HCT116 (cell line): ENCODE measurements at regions of chr2 and their contacts with region 1.

Region 1: GRCh38 chr2:203909261-203909967 is 27.1 kb upstream of the ICOS start:
- DNase-seq: peak; percentile 13
- ATAC-seq: peak; percentile 84
- H3K4me3 ChIP-seq: no peak overlapping the region
- H3K27ac ChIP-seq: no peak overlapping the region
- H3K4me1 ChIP-seq: no peaks in the 10 kb centered on the region
- H3K27me3 ChIP-seq: no peaks in the 10 kb centered on the region
- CTCF ChIP-seq: peak; percentile 46 to 74 (median 65); a peak in 5 of 6 replicates
- POLR2A ChIP-seq: no peak
- RAD21 ChIP-seq: peak; percentile 73

Region 2: GRCh38 chr2:202577250-202578183 is 1331.9 kb before region 1 on chr2:
- CTCF ChIA-PET with region 1: no interaction called
- POLR2A ChIA-PET with region 1: no interaction called
- RAD21 ChIA-PET with region 1: no interaction called
- intact Hi-C with region 1: loop called (anchors 2 kb)
- DNase-seq: no peak
- ATAC-seq: no peak
- H3K4me3 ChIP-seq: no peak overlapping the region
- H3K27ac ChIP-seq: no peak overlapping the region
- H3K4me1 ChIP-seq: no peaks in the 10 kb centered on the region
- H3K27me3 ChIP-seq: no peaks in the 10 kb centered on the region
- CTCF ChIP-seq: no peak
- POLR2A ChIP-seq: no peak
- RAD21 ChIP-seq: no peak

Region 3: DNA sequence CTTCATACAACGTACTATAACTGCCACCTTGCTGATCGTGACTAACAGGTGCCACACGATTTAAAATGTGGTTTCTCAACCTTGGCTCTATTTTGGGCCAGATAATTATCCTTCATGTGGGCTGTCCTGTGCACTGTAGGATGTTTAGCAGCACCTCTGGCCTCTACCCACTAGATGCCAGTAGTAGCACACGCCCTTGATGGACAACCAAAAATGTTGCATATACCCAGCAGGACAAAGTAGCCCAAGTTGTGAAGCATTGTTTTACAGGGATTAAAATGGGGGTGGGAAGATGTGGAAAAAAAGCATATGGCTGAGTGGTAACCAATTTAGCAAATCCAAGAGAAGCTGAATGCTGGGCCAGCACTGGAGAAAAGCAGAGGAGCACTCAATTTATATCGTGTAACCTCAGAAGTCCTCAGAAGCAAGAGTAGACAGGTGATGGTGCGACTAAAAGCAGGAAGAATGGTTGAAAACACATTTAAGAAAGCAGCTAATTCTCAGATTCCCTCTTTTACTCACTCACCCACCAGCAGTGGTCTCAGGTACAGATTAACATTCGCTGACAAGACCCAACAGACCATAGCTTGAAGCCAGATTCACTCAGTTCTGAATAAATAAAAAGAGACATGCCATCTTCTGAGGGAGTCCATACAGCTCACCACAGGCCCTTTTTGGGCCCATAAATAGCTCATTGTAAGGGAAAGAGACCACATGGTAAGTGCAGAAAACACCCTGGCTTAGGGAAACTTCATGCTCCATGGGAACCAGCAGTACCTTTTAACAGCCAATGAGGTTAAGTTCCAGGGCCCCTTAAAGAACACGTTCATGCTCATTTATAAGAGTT is 424.9 kb before region 1 on chr2:
- CTCF ChIA-PET with region 1: no interaction called
- POLR2A ChIA-PET with region 1: no interaction called
- RAD21 ChIA-PET with region 1: no interaction called
- intact Hi-C with region 1: loop called (anchors 1 kb)
- DNase-seq: no peak
- ATAC-seq: peak; percentile 89
- H3K4me3 ChIP-seq: no peak overlapping the region
- H3K27ac ChIP-seq: no peak overlapping the region
- H3K4me1 ChIP-seq: no peaks in the 10 kb centered on the region
- H3K27me3 ChIP-seq: no peaks in the 10 kb centered on the region
- CTCF ChIP-seq: peak; percentile 62 to 71 (median 67); a peak in 5 of 6 replicates
- POLR2A ChIP-seq: no peak
- RAD21 ChIP-seq: peak; percentile 90